Prostate gland (tissue), 2 donors: ENCODE measurements at regions of chr7 and their contacts with region 1.

Region 1: GRCh38 chr7:131507592-131508331 is 48.7 kb downstream of the PODXL start:
- DNase-seq: peak; percentile 80
- H3K4me3 ChIP-seq: no peak overlapping the region
- H3K27ac ChIP-seq: no peak overlapping the region
- H3K4me1 ChIP-seq: no peaks in the 10 kb centered on the region
- H3K27me3 ChIP-seq: no peaks in the 10 kb centered on the region
- CTCF ChIP-seq: peak; percentile 87 to 89 (median 88)
- POLR2A ChIP-seq: no peak

Region 2: DNA sequence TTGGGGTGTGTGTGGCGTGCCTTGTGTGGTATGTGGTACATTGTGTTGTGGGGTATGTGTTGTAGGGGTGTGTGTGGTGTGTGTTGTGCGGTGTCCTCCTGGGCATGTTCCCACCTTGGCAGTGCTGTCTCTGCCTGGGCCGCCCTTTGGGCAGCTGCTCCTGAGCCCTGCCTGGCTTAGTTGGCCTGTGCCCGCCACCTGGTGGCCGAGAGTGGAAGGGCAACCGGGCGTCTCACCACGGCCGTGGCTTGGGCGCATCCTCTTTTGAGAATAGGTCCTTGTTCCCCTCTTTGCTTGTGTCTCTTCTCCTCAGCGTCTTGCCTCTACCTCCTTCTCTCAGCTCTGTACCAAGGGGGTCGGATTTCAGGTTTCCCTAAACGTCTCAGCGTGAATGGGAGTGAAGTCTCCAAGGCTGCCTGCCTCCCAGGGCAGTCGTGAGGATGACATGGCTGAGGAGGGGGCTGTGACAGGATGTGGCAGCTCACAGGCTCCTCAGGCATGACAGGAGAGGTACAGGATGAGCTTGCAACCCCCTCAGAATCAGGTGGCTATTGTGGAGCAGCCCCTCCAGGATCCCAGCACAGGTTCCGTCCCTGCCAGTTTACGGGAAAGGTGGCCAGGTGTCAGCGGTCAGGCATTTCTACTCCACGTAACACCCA is 147.0 kb after region 1 on chr7:
- intact Hi-C with region 1: loop called (anchors 2 kb)
- DNase-seq: peak; percentile 75
- H3K4me3 ChIP-seq: no peak overlapping the region
- H3K27ac ChIP-seq: no peak overlapping the region
- H3K4me1 ChIP-seq: no peaks in the 10 kb centered on the region
- H3K27me3 ChIP-seq: no peaks in the 10 kb centered on the region
- CTCF ChIP-seq: peak; percentile 87 to 94 (median 92)
- POLR2A ChIP-seq: no peak